ENCODE measurements at regions of chr19 and their contacts with region 1.

Region 1: GRCh38 chr19:1605236-1606137 is at the start of gene UQCR11:
- DNase-seq: peak; percentile 97 to 98 (median 98)
- ATAC-seq: peak; percentile 93
- H3K4me3 ChIP-seq: peak within 1 kb of the TSS; percentile 99
- H3K27ac ChIP-seq: peak within 1 kb of the TSS; percentile 94
- H3K4me1 ChIP-seq: peaks cover 26 to 76% of the 10 kb centered on the region in 2 experiments
- H3K27me3 ChIP-seq: no peaks in the 10 kb centered on the region
- CTCF ChIP-seq: peak; percentile 75 to 79 (median 78)
- EP300 ChIP-seq: no peak
- POLR2A ChIP-seq: peak; percentile 83
- RAD21 ChIP-seq: peak; percentile 75 to 81
- polyA plus RNA-seq, gene UQCR11: 225 to 394 TPM

Region 2: DNA sequence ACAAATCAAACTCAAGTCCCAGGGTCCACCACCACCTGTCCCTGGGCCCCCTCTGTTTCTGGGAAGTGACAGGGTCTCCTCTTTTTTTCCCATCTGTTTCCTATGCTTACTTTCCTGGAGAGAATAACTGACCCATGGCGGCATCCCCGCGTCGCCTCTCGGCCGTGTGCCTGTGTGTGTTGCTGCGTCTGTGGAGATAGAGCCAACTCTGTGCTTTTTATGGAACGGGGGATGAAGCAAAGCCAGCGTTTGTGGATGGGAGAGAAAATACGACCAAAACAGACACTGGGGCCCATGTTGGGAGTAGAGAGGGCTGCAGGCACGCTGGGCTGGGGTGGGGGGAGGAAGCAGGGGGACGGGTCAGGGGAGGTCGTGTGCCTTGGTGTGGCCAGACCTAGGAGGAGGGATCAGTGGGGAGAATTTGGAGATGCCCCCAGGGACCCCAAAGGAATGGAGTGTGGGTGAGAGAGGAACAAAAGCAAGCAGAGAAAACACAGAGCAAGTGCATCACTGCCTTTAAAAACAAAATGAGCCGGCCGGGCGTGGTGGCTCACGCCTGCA is 65.0 kb before region 1 on chr19:
- CTCF ChIA-PET with region 1: no interaction called
- POLR2A ChIA-PET with region 1: no interaction called
- in situ Hi-C with region 1: no loop called
- intact Hi-C with region 1: loop called (anchors 10 kb)
- DNase-seq: no peak
- ATAC-seq: no peak
- H3K4me3 ChIP-seq: no peak overlapping the region
- H3K27ac ChIP-seq: no peak overlapping the region
- H3K4me1 ChIP-seq: peaks cover 8 to 17% of the 10 kb centered on the region in 2 experiments
- H3K27me3 ChIP-seq: no peaks in the 10 kb centered on the region; a peak in 1 of 5 replicates
- CTCF ChIP-seq: no peak
- EP300 ChIP-seq: no peak
- POLR2A ChIP-seq: no peak
- RAD21 ChIP-seq: no peak

Region 3: GRCh38 chr19:1592755-1593500 is 12.6 kb before region 1 on chr19 and contains the start of gene MBD3:
- CTCF ChIA-PET with region 1: no interaction called
- POLR2A ChIA-PET with region 1: interaction called, 17 read pairs
- in situ Hi-C with region 1: no loop called
- intact Hi-C with region 1: no loop called
- DNase-seq: peak; percentile 91 to 99 (median 98)
- ATAC-seq: peak; percentile 80
- H3K4me3 ChIP-seq: peak within 1 kb of the TSS; percentile 92
- H3K27ac ChIP-seq: peak within 1 kb of the TSS; percentile 95
- H3K4me1 ChIP-seq: peaks cover 15 to 40% of the 10 kb centered on the region in 2 experiments
- H3K27me3 ChIP-seq: no peaks in the 10 kb centered on the region
- CTCF ChIP-seq: no peak
- EP300 ChIP-seq: 0 out of 2 replicates have a peak, but pooled peaks have one; percentile 23
- POLR2A ChIP-seq: peak; percentile 73
- RAD21 ChIP-seq: no peak
- polyA plus RNA-seq, gene MBD3: 0.24 to 0.52 TPM

Region 4: GRCh38 chr19:1652471-1653299 is 47.2 kb after region 1 on chr19 and contains the start of gene TCF3:
- CTCF ChIA-PET with region 1: no interaction called
- POLR2A ChIA-PET with region 1: interaction called, 4 read pairs
- in situ Hi-C with region 1: no loop called
- intact Hi-C with region 1: loop called (anchors 5 kb)
- DNase-seq: peak; percentile 92 to 99 (median 96)
- ATAC-seq: peak; percentile 93
- H3K4me3 ChIP-seq: peak within 1 kb of the TSS; percentile 79
- H3K27ac ChIP-seq: peak within 1 kb of the TSS; percentile 100
- H3K4me1 ChIP-seq: peaks cover 12 to 72% of the 10 kb centered on the region in 2 experiments
- H3K27me3 ChIP-seq: no peaks in the 10 kb centered on the region
- CTCF ChIP-seq: no peak
- EP300 ChIP-seq: peak; percentile 30
- POLR2A ChIP-seq: peak; percentile 77
- RAD21 ChIP-seq: peak; percentile 10 to 33; a peak in 2 of 4 replicates
- polyA plus RNA-seq, gene TCF3: 5.6 to 5.7 TPM

Region 5: DNA sequence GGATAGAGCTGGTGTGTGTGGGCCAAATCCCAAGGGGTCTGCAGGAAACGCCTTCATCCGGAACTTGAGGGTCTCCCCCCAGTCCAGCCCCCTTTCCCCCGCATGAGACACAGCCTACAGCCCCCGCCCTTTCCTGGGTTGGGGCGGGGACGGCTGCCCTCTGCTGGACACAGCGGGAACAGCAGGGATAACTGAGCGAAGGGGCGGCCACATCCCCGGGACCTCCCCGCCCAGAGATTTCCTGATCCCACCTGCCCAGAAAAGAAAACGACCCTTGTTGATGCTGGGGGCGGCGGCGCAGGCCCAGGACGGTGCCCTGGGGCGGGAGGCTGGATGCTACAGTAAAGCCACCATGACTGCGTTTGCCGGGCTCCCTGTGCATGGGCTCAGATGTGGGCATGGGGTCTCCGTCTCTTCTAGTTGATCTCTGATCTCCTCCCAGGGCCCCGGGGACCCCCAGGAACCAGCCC is 162.0 kb after region 1 on chr19:
- CTCF ChIA-PET with region 1: interaction called, 3 read pairs
- POLR2A ChIA-PET with region 1: no interaction called
- in situ Hi-C with region 1: no loop called
- intact Hi-C with region 1: loop called (anchors 5 kb)
- DNase-seq: peak; percentile 80 to 94 (median 90)
- ATAC-seq: peak; percentile 90
- H3K4me3 ChIP-seq: no peak overlapping the region
- H3K27ac ChIP-seq: no peak overlapping the region; the same call in 2 of the 3 replicates
- H3K4me1 ChIP-seq: peaks cover 9 to 51% of the 10 kb centered on the region in 2 experiments; a peak in 4 of 5 replicates
- H3K27me3 ChIP-seq: peaks cover 0 to 10% of the 10 kb centered on the region in 2 experiments; a peak in 4 of 5 replicates
- CTCF ChIP-seq: peak; percentile 90 to 94 (median 93)
- EP300 ChIP-seq: no peak
- POLR2A ChIP-seq: no peak
- RAD21 ChIP-seq: peak; percentile 92 to 97

Measured in K562 (cell line).